ENCODE measurements at regions of chr2 and their contacts with region 1.

Region 1: GRCh38 chr2:71798266-71799012 is 345.1 kb downstream of the DYSF start:
- DNase-seq: peak in 29 of 42 donors; percentile 6 to 74 (median 28)

Region 2: GRCh38 chr2:71545572-71546274 is 252.7 kb before region 1 on chr2:
- intact Hi-C with region 1: loop called (anchors 5 kb)
- DNase-seq: peak in 41 of 42 donors; percentile 43 to 89 (median 68)

Region 3: DNA sequence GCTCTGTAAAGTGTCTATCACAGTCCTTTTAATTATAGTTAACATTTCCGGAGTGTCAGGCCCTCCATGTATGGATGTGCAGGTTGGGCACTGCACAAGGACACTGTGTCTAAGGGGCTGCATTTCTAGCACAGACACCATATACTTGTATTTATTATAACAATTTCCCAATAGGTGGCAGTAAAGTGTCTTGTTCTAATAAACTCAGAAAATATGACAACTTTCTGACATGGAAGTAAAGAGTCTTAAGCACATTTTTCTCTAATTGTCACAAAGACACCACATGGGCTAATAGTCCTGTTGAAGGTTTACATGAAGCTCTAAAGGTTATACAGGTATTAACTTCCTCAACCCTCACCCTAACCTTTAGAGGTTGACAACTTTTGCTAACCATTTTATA is 188.5 kb before region 1 on chr2:
- intact Hi-C with region 1: loop called (anchors 10 kb)
- DNase-seq: peak in 21 of 42 donors; percentile 0 to 39 (median 7)

Region 4: GRCh38 chr2:72137498-72138010 is 339.1 kb after region 1 on chr2:
- intact Hi-C with region 1: loop called (anchors 10 kb)
- DNase-seq: peak; percentile 29 to 91 (median 80)

Measured in head of caudate nucleus (tissue), 42 donors.